HepG2 (cell line): ENCODE measurements at regions of chr2 and their contacts with region 1.

Region 1: GRCh38 chr2:179403624-179404023 is 139.0 kb upstream of the SESTD1 start:
- DNase-seq: no peak
- ATAC-seq: no peak
- H3K4me3 ChIP-seq: no peak overlapping the region
- H3K27ac ChIP-seq: no peak overlapping the region
- H3K4me1 ChIP-seq: no peaks in the 10 kb centered on the region
- H3K27me3 ChIP-seq: no peaks in the 10 kb centered on the region
- CTCF ChIP-seq: no peak
- EP300 ChIP-seq: no peak
- POLR2A ChIP-seq: no peak
- RAD21 ChIP-seq: no peak

Region 2: DNA sequence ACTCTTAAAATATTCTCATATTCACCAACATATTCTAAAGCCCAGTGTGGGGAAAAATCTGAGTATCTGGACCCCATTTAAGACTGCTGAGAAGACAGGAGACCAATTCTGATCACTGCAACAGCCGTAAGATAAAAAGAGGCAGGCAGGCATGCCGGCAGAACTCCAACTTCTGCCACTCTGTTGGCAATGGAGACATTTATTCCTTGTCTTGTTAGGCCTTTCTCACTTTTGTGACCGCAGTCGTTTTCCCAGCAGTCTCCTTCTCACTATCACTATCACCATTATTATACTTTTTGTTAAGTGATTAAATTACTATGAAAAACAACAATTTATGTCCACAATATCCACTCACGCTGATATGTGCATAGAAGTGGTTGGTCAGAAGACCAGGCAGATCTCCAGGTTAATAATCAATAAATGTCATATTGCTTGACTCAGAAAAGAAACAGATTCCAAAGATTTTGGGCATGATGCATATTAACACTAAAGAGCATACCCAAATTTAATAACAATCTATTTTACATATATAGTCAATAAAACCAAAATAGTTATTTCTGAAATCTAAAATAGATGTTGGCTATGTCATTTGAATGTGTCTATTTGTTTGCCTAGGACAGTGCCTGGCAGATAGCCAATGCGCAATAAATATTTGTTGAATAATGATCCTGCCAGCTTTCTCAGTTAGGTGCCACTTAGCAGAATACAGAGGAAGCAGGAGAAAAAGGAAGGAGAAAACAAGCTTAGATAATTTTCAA is 177.2 kb before region 1 on chr2:
- CTCF ChIA-PET with region 1: no interaction called
- POLR2A ChIA-PET with region 1: no interaction called
- in situ Hi-C with region 1: loop called (anchors 10 kb)
- intact Hi-C with region 1: no loop called
- DNase-seq: no peak
- ATAC-seq: no peak
- H3K4me3 ChIP-seq: no peak overlapping the region
- H3K27ac ChIP-seq: no peak overlapping the region
- H3K4me1 ChIP-seq: peaks cover 33% of the 10 kb centered on the region
- H3K27me3 ChIP-seq: no peaks in the 10 kb centered on the region
- CTCF ChIP-seq: no peak
- EP300 ChIP-seq: no peak
- POLR2A ChIP-seq: no peak
- RAD21 ChIP-seq: no peak

Region 3: DNA sequence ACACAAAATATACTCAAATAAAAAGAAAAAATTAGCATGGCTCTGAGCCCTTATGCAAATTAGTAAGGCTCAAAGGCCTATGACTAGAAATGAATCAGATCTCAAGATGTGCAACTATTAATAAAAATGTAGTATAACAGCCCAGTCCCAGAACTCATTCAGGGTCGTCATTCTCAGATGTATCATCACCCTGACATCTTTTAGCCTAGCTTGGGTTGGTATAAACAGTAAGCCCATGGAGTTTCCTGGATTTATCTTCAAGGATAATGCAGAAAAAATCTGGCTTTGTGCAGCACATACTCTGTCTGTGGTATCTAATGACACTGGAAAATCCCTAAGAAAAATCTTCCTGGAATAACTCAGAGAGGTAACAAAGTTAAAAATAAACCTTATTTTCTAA is 218.5 kb after region 1 on chr2:
- CTCF ChIA-PET with region 1: no interaction called
- POLR2A ChIA-PET with region 1: no interaction called
- in situ Hi-C with region 1: no loop called
- intact Hi-C with region 1: no loop called
- DNase-seq: no peak
- ATAC-seq: no peak
- H3K4me3 ChIP-seq: no peak overlapping the region
- H3K27ac ChIP-seq: no peak overlapping the region
- H3K4me1 ChIP-seq: no peaks in the 10 kb centered on the region
- H3K27me3 ChIP-seq: no peaks in the 10 kb centered on the region; a peak in 1 of 5 replicates
- CTCF ChIP-seq: no peak
- EP300 ChIP-seq: no peak
- POLR2A ChIP-seq: no peak
- RAD21 ChIP-seq: no peak